Esophagus muscularis mucosa (tissue), 4 donors: ENCODE measurements at regions of chr11 and their contacts with region 1.

Region 1: DNA sequence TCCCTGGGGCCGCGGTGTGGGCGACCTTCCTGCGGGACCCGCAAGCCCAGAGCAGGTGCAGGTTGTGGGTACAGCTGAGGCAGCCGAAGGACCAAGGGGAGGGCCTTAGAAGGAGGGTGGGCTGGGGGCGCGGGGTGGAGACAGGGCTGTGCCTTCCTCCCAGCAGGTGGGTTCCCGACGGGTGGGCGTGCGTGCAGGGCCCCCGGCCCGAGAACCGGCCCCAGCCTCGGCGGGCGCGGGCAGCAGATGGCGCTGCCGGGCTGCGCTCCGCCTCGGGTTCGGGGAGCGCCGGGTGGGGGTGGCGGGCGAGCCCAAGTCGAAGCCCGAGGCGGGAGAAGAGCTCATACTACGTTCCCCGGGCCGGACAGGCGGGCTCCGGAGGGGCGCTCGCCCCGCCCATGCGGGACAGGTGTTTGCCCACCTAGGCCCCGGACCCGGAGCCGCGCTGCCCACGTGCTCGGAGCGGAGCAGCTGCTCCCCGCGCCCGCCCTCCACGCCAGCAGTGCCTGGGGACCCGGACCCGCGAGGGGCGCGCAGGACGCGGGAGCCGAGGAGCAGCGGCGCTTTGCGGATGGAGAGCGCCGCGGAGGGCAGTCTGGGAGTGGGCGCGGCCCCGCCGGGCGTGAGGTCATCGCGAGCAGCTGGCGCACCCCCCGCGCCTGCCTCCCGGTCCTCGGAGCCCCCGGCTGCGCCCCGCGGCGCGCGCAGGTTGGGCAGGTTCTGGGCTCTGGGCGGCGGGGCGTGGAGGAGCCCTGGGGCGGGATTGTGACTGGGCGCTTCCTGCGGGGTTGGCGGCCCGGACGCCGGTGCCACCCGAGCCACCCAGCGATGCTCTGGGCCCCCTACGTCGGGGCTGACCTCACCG is 25.3 kb downstream of the DUSP8 start:
- DNase-seq: no peak
- H3K4me3 ChIP-seq: peak overlapping the region; percentile 44 to 57 (median 50)
- H3K27ac ChIP-seq: peak overlapping the region; percentile 3 to 81 (median 78)
- H3K4me1 ChIP-seq: peaks cover 27 to 36% (median 30%) of the 10 kb centered on the region in 4 donors
- H3K27me3 ChIP-seq: peaks cover 0 to 53% (median 13%) of the 10 kb centered on the region in 4 donors
- CTCF ChIP-seq: peak; percentile 91 to 92 (median 91)
- EP300 ChIP-seq: no peak
- POLR2A ChIP-seq: no peak

Region 2: DNA sequence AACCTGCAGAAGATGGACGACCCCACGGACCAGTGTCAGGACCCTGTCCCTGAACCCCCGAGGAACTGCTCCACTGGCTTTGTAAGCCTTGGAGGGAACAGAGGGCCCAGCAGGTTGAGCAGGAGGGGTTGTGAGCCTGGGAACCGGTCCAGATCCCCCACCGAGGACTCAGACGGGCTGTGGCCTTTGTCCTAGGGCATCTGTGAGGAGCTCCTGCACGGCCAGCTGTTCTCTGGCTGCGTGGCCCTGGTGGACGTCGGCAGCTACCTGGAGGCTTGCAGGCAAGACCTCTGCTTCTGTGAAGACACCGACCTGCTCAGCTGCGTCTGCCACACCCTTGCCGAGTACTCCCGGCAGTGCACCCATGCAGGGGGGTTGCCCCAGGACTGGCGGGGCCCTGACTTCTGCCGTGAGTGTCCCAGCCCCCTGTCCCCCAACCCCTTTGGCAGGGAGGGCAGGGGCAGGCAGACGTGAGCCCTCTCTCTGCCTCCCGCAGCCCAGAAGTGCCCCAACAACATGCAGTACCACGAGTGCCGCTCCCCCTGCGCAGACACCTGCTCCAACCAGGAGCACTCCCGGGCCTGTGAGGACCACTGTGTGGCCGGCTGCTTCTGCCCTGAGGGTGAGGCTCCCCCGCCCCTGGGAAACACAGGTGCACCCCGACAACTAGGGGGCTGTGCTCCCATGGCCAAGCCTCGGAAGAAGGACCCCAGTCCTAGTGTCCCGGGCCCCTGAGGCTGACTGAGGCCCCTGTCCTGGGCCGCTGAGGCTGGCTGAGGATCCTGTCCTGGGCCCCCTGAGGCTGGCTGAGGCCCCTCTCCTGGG is 382.6 kb before region 1 on chr11:
- intact Hi-C with region 1: no loop called
- DNase-seq: no peak
- H3K4me3 ChIP-seq: no peak overlapping the region
- H3K27ac ChIP-seq: no peak overlapping the region
- H3K4me1 ChIP-seq: no peaks in the 10 kb centered on the region
- H3K27me3 ChIP-seq: peaks cover 0 to 57% (median 0%) of the 10 kb centered on the region in 4 donors
- CTCF ChIP-seq: no peak
- EP300 ChIP-seq: no peak
- POLR2A ChIP-seq: no peak

Region 3: DNA sequence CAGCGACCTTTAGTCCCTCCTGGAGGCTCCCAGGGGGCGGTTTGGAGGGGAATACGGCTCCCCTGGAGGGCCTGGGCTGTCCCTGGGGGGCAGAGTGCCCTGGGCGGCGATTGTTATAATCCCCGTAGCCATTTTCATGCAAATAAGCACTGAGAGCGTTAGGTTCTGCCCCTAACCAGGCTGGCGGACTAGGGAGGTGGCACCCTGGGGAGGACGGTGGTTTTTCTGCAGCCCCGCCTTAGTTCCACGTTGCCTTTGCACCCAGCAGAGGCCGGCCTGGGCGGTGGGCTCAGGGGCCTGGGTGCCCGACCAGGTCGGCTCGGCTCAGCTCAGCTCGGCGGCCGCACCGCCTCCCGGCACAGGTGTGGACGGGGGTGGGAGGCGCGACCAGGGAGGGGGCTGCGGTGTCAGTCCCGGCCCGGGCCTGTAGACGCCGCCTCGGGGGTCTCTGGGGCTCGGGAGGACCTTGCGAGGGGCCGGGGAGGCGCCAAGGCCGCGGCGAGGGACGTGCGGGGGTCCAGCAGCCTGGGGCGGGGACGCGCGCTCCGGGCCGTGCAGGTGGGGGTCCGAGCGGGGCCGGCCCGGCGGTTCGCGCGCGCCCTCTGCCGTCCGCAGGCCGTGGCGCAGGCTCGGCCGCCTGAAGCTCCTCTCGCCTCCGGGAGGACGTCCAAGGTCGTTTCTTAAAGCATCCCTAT is 27.6 kb after region 1 on chr11:
- intact Hi-C with region 1: loop called (anchors 1 kb)
- DNase-seq: no peak
- H3K4me3 ChIP-seq: peak overlapping the region; percentile 48 to 85 (median 53)
- H3K27ac ChIP-seq: peak overlapping the region; percentile 79 to 87 (median 81)
- H3K4me1 ChIP-seq: peaks cover 38 to 50% (median 48%) of the 10 kb centered on the region in 4 donors
- H3K27me3 ChIP-seq: peaks cover 0 to 11% (median 2%) of the 10 kb centered on the region in 4 donors
- CTCF ChIP-seq: peak; percentile 87 to 96 (median 95)
- EP300 ChIP-seq: no peak
- POLR2A ChIP-seq: no peak

Region 4: GRCh38 chr11:1628506-1629325 is 81.9 kb after region 1 on chr11:
- intact Hi-C with region 1: loop called (anchors 2 kb)
- DNase-seq: no peak
- H3K4me3 ChIP-seq: no peak overlapping the region
- H3K27ac ChIP-seq: no peak overlapping the region
- H3K4me1 ChIP-seq: peaks cover 3 to 9% (median 7%) of the 10 kb centered on the region in 4 donors
- H3K27me3 ChIP-seq: peaks cover 0 to 48% (median 1%) of the 10 kb centered on the region in 4 donors
- CTCF ChIP-seq: peak; percentile 72 to 97 (median 77)
- EP300 ChIP-seq: no peak
- POLR2A ChIP-seq: no peak

Region 5: DNA sequence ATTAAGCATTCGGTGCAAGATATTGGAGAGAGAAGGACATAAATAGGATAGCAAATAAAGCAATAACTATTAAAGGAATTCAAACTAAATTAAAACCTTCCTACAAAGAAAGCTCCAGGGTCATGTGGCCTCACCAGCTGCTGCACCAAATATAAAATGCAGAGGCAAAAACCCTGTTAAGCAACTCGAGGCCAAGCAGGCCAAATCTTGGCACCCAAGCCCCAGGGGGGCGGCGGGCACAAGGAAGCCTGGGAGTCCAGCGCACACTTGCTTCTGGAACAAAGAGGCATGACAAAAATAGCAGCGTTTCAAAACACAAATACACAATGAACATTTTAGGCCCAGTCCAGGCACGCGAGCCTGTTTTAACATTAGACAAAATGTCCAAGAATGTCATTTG is 171.0 kb after region 1 on chr11:
- intact Hi-C with region 1: no loop called
- DNase-seq: no peak
- H3K4me3 ChIP-seq: no peak overlapping the region
- H3K27ac ChIP-seq: no peak overlapping the region
- H3K4me1 ChIP-seq: no peaks in the 10 kb centered on the region
- H3K27me3 ChIP-seq: peaks cover 0 to 58% (median 0%) of the 10 kb centered on the region in 4 donors
- CTCF ChIP-seq: no peak
- EP300 ChIP-seq: no peak
- POLR2A ChIP-seq: no peak